ENCODE measurements at regions of chr11 and their contacts with region 1.

Region 1: DNA sequence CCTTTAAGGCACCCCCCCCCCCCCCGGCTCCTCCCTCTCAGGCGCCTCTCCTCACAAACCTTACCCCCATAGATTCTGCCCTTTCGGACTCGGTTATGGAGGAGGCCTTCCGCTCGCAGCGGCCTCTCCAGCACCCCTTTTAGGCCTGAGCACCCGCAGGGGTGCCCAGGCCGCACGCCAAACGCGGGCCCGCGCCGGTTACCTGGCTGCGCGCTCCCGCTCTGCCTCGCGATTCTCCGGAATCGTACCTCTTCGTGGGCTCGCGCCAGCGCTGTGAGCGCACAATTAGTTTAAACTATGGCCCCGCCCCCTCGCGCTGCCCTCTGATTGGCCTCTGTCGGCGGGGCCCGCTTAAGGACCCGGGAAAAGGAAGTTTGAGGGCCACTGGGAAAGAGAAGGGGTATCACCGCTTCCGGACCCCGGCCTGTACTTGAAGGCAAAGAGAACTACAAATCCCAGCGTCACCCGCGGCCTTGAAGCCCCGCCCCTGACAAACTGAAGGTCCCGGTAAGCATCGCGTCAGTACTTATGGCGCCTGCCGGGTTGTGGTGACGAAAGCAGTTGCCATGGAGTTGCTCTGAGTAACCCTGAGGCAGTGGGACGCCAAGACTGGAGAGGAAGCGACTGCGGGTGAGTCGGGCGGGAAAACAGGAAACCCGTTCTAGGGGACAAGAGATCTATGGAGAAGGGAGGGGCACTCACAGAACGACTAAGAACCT is at the starts of genes LRRC51 and NUMA1:
- DNase-seq: peak; percentile 97 to 100 (median 99)

Region 2: GRCh38 chr11:72040726-72041441 is 39.5 kb before region 1 on chr11:
- intact Hi-C with region 1: loop called (anchors 2 kb)
- DNase-seq: peak; percentile 87 to 99 (median 92)

Region 3: GRCh38 chr11:72102946-72103753 is 22.7 kb after region 1 on chr11 and contains the start of gene LAMTOR1:
- intact Hi-C with region 1: loop called (anchors 1 kb)
- DNase-seq: peak; percentile 97 to 100 (median 99)

Measured in posterior cingulate gyrus (tissue), 11 donors.